Mammary epithelial cell (primary cell): ENCODE measurements at regions of chr4 and their contacts with region 1.

Region 1: GRCh38 chr4:23889814-23890341 is at the start of gene PPARGC1A:
- DNase-seq: peak; percentile 16
- H3K4me3 ChIP-seq: peak within 1 kb of the TSS; percentile 43 to 47 (median 45)
- H3K27ac ChIP-seq: no peak within 1 kb of the TSS
- H3K4me1 ChIP-seq: peaks cover 31% of the 10 kb centered on the region
- H3K27me3 ChIP-seq: no peaks in the 10 kb centered on the region
- CTCF ChIP-seq: no peak
- total RNA-seq, gene PPARGC1A: 5.3 TPM in 1 of 2 donors, not detected in the other

Region 2: DNA sequence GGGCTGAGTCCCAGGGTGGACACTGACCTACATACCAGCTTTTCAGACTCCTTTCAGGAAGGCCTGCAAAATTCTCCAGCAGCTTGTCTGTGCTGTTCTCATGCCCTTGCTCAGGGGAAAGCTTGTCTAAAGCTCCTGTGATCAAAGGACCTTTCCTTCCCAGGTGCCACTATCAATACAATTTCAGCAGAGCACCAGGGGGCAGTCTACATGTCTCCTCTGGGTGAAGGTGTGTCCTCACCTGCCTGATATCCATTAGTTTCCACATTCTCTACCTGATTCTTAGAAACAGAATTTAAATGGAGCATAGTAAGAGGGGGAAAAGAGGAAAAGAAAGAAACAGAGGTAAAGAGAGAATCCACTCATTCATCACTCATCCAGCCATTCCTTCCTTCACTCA is 114.2 kb before region 1 on chr4:
- CTCF ChIA-PET with region 1: interaction called, 28 read pairs
- dilution Hi-C with region 1: no loop called
- in situ Hi-C with region 1: no loop called
- intact Hi-C with region 1: no loop called
- DNase-seq: peak; percentile 1
- H3K4me3 ChIP-seq: no peak overlapping the region
- H3K27ac ChIP-seq: no peak overlapping the region
- H3K4me1 ChIP-seq: no peaks in the 10 kb centered on the region
- H3K27me3 ChIP-seq: no peaks in the 10 kb centered on the region
- CTCF ChIP-seq: peak; percentile 10 to 41

Region 3: GRCh38 chr4:23828020-23828715 is 61.7 kb before region 1 on chr4:
- CTCF ChIA-PET with region 1: no interaction called
- dilution Hi-C with region 1: no loop called
- in situ Hi-C with region 1: no loop called
- intact Hi-C with region 1: no loop called
- DNase-seq: no peak
- H3K4me3 ChIP-seq: no peak overlapping the region
- H3K27ac ChIP-seq: no peak overlapping the region
- H3K4me1 ChIP-seq: no peaks in the 10 kb centered on the region
- H3K27me3 ChIP-seq: no peaks in the 10 kb centered on the region
- CTCF ChIP-seq: no peak

Region 4: DNA sequence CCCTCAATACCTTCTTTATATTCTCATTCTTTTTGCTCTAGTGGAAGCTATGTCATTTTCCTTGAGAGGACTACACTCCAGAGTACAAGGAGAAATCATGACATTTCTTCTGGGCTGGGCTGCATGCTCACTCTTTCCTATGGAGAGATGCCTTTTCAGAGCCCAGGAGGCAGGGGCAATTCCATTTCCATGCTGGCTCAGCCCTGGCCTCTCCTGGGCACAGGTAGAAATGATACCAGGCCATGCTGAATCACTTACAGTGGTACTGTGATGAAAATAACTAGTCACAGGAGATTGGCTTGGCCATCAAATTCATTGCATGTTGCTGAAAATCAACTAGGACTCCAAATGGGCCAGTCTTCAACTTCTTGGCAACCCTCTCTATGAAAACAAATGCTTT is 34.0 kb after region 1 on chr4:
- CTCF ChIA-PET with region 1: no interaction called
- dilution Hi-C with region 1: no loop called
- in situ Hi-C with region 1: no loop called
- intact Hi-C with region 1: loop called (anchors 5 kb)
- DNase-seq: peak; percentile 20
- H3K4me3 ChIP-seq: no peak overlapping the region
- H3K27ac ChIP-seq: no peak overlapping the region
- H3K4me1 ChIP-seq: peaks cover 42% of the 10 kb centered on the region
- H3K27me3 ChIP-seq: no peaks in the 10 kb centered on the region
- CTCF ChIP-seq: peak; percentile 6 to 53

Region 5: DNA sequence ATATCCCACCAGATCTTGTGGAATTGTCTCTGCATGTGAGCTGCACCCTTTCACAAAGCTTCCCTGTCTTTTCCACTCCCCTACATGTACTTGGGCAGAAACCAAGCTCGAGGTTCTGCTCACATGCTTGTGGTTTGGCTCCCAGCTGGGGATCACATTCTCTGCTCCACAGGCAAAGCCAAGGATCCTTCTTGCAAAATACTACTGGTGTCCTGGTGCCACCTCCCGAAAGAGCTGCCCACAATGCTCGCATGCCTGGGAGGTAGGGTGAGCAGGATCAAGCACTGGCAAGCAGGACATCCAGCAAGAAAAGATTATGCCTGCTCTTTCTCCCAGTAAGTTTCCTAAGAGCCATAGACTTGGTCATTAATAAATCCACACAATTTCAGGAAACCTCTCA is 45.0 kb after region 1 on chr4:
- CTCF ChIA-PET with region 1: no interaction called
- dilution Hi-C with region 1: no loop called
- in situ Hi-C with region 1: loop called in 1 of 2 experiments (anchors 10 kb)
- intact Hi-C with region 1: no loop called
- DNase-seq: peak; percentile 87
- H3K4me3 ChIP-seq: no peak overlapping the region
- H3K27ac ChIP-seq: no peak overlapping the region
- H3K4me1 ChIP-seq: peaks cover 7% of the 10 kb centered on the region
- H3K27me3 ChIP-seq: no peaks in the 10 kb centered on the region
- CTCF ChIP-seq: peak in 1 of 2 donors; percentile 42